ENCODE measurements at regions of chr10 and their contacts with region 1.

Region 1: DNA sequence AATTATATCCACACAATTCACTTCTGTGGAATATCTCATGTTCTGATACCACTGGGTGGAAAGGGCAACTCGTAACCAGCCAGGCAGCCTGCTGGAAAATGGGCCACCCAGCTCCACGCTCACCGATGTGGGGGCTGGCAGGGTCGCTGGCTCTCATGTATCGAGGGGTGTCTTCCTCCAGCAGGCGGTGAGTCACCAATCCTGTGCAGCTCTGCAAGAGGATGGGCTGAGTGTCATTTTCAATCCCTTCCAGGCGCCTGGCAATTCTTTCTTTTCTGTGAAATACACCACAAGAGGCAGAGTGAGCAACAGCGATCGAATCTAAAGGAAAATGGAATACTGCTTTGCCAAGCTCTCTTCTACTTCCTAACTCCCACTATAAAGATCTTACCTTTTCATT is 80.1 kb downstream of the SVIL start:
- DNase-seq: no peak
- ATAC-seq: no peak
- H3K4me3 ChIP-seq: no peak overlapping the region
- H3K27ac ChIP-seq: no peak overlapping the region
- H3K4me1 ChIP-seq: no peaks in the 10 kb centered on the region
- H3K27me3 ChIP-seq: no peaks in the 10 kb centered on the region
- CTCF ChIP-seq: no peak

Region 2: DNA sequence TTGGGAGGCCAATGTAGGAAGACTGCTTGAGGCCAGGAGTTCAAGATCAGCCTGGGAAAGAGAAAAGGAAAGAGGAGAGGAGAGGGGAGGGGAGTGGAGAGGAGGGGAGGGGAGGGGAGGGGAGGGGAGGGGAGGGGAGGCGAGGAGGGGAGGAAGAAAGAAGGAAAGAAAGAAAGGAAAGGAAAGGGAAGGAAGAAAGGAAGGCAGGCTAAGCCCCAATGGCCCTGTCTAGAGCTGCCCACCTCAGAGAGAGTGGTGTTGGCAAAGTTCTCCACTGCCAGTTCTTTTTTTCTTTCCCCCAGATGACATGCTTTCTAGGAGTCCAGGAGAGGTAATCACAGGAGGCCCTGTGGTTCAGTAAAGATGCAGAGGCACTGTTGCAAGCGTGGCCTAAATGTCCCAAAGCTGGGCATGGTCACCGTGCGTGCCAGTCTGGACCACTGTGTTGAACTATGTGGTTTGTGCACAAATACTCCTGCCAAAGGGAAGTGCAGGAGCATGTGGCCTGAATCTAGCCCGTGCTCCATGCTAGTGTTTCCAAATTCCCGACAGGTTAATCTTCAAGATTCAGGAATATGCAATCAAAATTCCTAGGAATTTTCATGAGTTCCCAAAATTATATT is 1595.5 kb before region 1 on chr10:
- CTCF ChIA-PET with region 1: no interaction called
- POLR2A ChIA-PET with region 1: interaction called, 14 read pairs
- in situ Hi-C with region 1: no loop called
- intact Hi-C with region 1: no loop called
- DNase-seq: no peak
- ATAC-seq: no peak
- H3K4me3 ChIP-seq: no peak overlapping the region
- H3K27ac ChIP-seq: no peak overlapping the region
- H3K4me1 ChIP-seq: no peaks in the 10 kb centered on the region
- H3K27me3 ChIP-seq: no peaks in the 10 kb centered on the region
- CTCF ChIP-seq: no peak

Region 3: GRCh38 chr10:29646238-29646902 is 91.7 kb after region 1 on chr10:
- CTCF ChIA-PET with region 1: no interaction called
- POLR2A ChIA-PET with region 1: no interaction called
- in situ Hi-C with region 1: no loop called
- intact Hi-C with region 1: no loop called
- DNase-seq: no peak
- ATAC-seq: no peak
- H3K4me3 ChIP-seq: no peak overlapping the region
- H3K27ac ChIP-seq: peak overlapping the region; percentile 51
- H3K4me1 ChIP-seq: peaks cover 24% of the 10 kb centered on the region
- H3K27me3 ChIP-seq: no peaks in the 10 kb centered on the region
- CTCF ChIP-seq: no peak